Posterior vena cava (tissue), 2 donors: ENCODE measurements at regions of chr1 and their contacts with region 1.

Region 1: GRCh38 chr1:1796466-1796865 is 18.2 kb upstream of the NADK start:
- DNase-seq: no peak

Region 2: DNA sequence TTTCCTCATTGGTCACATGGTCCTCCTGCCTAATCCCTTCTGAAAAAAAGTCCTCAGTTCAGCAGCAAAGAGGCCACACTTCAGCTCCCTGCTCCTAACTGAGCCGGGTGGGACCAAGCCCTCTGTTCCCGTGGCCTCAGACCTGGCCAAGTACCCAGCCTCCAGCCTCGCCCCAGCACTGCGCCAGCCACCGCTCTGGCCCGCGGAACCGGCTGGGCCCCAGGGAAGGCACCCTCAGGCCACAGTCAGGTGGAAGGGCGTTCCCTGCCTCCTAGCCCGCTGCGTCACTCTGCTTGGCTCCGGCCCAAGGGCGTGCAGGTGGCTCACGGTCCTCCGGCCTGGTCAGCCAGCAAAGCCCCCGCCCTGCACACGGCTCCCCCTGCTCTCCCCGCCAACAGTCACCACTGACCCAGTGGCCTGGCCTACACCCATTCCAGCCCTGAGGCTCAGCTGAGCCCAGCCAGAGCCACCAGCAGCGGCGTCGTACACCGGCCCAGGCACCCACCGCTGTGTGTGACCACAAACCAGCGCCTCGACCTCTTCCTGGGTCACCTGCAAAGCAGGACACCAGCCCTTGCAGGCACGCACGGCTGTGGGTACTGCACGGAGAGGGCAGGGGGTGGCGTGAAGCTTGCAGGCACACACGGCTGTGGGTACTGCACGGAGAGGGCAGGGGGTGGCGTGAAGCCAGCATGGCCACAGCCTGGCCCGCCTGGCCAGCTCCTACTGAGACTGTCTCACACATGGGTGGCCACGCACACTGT is 37.6 kb before region 1 on chr1:
- intact Hi-C with region 1: no loop called
- DNase-seq: no peak

Region 3: GRCh38 chr1:1873186-1873585 is 76.7 kb after region 1 on chr1:
- intact Hi-C with region 1: loop called in 1 of 2 experiments (anchors 5 kb)
- DNase-seq: peak; percentile 23